ENCODE measurements at regions of chr13 and their contacts with region 1.

Region 1: DNA sequence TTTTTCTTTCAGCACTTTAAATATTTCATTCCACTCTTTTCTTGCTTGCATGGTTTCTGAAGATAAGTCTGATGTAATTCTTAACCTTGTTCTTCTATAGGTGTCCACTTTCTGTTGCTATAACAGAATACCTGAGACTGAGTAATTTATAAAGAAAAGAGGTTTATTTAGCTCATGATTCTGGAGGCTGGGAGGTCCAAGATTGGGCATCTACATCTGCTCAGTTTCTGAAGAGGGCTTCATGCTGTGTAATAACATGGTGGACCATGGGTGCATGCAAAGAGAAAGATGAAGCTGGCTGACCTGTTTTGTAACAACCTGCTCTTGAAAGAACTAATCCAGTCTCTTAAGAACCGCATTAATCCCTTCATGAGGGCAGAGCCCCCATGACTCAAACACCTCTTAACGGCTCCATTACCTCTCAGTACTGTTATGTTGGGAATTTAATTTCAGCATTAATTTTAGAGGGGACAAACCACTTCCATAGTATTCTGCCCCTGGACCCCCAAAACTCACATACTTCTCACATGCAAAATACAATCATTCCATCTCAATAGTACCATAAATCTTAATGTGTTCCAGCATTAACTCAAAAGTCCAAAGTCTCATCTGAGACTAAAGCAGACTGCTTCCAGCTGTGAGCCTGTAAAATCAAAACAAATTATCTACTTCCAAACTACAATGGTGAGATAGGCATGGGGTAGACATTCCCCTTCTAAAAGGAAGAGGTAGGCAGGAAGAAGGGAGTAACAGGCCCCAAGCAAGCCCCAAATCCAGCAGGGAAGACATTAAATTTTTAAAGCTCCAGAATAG is 9.6 kb upstream of the FGF9 start:
- DNase-seq: no peak
- H3K4me3 Mint-ChIP-seq: no peak overlapping the region
- H3K27ac Mint-ChIP-seq: no peak overlapping the region
- H3K4me1 Mint-ChIP-seq: no peaks in the 10 kb centered on the region
- H3K27me3 Mint-ChIP-seq: peaks cover 21% of the 10 kb centered on the region

Region 2: DNA sequence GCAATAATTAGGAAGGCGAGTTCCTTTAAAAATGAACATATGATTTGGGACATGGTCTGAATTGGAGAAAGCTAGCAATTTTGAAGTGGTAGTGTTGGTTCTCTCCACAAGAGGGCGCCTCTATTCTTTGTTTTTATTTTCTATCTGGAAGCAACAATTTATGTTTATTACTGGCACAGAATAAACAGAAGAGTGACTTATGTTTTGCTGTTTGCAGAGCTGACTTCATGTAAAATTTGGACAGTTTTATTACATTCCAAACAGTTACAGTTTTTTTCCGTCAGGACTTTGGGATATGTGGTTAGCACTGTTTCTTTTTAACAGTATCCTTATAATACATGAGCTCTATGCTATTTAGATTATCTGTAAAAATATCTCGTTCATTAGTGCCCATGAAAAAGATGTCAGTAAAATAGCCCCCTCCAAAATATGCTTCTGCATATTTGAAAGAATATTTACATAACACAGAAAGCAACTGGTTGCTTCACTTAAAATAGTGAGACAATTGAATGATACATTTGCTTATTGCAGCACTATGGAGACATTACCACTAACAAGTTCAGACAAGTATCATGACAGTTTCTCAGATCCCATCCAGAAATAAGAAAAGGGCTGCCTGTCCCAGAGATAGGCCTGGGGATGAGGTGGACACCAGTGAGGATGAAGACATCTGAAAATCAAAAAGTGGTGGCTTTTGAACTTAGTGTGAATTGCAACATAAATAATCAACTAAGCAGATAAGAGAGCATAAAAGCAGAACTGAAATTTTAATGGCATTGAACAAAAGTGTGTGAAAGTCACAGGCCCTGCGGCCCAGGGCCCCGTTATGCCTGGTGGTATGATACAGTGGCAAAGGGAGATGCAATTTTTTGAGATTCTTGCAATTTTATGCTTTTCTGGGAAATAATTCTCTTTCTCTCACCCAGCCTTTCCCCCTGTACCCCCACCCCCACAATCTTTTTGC is 22.7 kb before region 1 on chr13:
- CTCF ChIA-PET with region 1: interaction called, 15 read pairs
- POLR2A ChIA-PET with region 1: no interaction called
- intact Hi-C with region 1: no loop called
- DNase-seq: peak; percentile 15
- H3K4me3 Mint-ChIP-seq: no peak overlapping the region
- H3K27ac Mint-ChIP-seq: no peak overlapping the region
- H3K4me1 Mint-ChIP-seq: peaks cover 2% of the 10 kb centered on the region
- H3K27me3 Mint-ChIP-seq: peaks cover 3% of the 10 kb centered on the region

Region 3: GRCh38 chr13:21825186-21825585 is 163.9 kb after region 1 on chr13:
- CTCF ChIA-PET with region 1: no interaction called
- POLR2A ChIA-PET with region 1: no interaction called
- intact Hi-C with region 1: no loop called
- DNase-seq: no peak
- H3K4me3 Mint-ChIP-seq: no peak overlapping the region
- H3K27ac Mint-ChIP-seq: no peak overlapping the region
- H3K4me1 Mint-ChIP-seq: no peaks in the 10 kb centered on the region
- H3K27me3 Mint-ChIP-seq: peaks cover 1% of the 10 kb centered on the region

Region 4: DNA sequence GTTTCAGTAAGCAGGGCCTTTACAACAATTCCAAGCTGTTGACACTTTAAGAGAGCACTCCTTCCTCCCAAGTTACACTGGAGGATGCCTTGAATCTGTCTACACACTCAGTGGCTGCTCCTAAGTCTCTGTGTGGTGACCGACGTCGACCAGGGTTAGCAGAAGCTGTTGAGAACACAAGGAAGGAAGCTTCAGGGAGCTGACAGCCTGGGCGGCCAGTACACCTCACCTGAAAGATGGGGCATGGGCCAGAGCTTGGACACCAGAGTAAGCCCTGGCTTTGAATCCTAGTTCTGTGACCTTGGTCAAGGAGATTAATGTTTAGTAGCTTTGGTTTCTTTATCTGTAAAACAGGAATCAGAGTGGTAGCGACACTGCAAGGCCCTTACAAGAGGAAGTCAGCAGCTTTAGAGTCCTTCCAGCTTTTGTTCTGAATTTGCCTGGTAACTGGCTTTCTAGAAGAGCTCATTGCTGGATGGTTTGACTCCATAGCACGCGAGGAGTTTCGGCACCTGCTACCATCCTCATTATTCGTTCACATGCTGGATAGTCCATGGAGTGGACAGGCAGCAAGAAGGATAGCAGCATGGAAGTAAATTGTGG is 223.8 kb after region 1 on chr13:
- CTCF ChIA-PET with region 1: no interaction called
- POLR2A ChIA-PET with region 1: no interaction called
- intact Hi-C with region 1: no loop called
- DNase-seq: no peak
- H3K4me3 Mint-ChIP-seq: no peak overlapping the region
- H3K27ac Mint-ChIP-seq: no peak overlapping the region
- H3K4me1 Mint-ChIP-seq: peaks cover 6% of the 10 kb centered on the region
- H3K27me3 Mint-ChIP-seq: no peaks in the 10 kb centered on the region

Measured in activated CD4-positive, alpha-beta memory T cell treated with anti-CD3 and anti-CD28 coated beads for 36 hours (primary cell).